ENCODE measurements at regions of chr4 and their contacts with region 1.

Region 1: DNA sequence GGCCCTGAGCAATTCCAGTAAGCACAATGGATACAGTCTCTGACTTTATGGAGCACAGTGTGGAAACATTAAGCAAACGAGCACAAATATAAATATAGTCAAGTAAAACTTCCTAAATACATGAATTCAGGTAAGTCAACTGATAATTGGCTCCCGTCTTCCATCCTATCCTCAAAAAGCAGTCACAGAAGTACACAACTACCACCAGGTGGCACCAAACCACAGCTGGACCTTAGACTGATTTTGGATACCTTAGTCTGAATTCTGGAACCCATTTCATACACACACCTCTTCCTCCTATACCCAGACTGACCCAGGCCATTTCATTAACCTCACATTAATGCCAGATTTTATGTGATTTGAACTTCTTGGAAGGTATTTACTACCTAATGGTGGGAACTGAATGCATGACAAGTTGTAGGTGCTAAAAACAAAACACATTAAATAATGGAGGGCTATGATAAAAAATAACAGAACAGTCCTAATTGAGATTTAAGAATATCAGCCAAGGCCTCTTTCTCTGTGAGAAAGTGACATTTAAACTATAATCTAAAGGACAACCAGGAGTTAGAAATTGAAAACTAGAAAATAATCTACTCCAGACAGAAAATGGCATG is 77.5 kb downstream of the ELF2 start:
- DNase-seq: peak; percentile 81
- ATAC-seq: peak; percentile 81
- H3K4me3 Mint-ChIP-seq: no peak overlapping the region
- H3K27ac Mint-ChIP-seq: no peak overlapping the region
- H3K4me1 Mint-ChIP-seq: peaks cover 4% of the 10 kb centered on the region
- H3K27me3 Mint-ChIP-seq: no peaks in the 10 kb centered on the region

Region 2: DNA sequence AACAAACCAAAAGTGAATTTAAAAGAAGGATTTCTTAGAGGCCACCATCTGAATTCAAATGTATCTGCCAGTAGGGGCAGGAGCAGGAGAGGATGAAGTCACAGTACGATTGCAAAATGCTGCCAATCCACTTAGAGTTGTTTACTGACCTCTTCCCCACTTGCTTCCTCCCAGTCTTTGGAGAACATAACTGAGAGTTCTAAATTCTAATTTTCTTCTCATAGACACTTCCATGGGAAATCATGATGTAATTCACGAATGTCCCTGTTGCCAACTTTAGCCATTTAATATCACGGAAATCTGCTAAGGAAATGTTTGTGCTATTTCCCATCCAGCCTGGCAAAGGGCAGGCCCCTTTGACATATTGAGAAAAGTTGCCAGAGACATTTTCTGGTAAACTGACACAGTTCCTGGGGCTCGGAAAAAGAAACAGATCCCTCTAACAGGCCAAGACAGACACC is 117.5 kb before region 1 on chr4:
- CTCF ChIA-PET with region 1: no interaction called
- DNase-seq: no peak
- ATAC-seq: no peak
- H3K4me3 Mint-ChIP-seq: no peak overlapping the region
- H3K27ac Mint-ChIP-seq: no peak overlapping the region
- H3K4me1 Mint-ChIP-seq: no peaks in the 10 kb centered on the region
- H3K27me3 Mint-ChIP-seq: peaks cover 5% of the 10 kb centered on the region

Region 3: DNA sequence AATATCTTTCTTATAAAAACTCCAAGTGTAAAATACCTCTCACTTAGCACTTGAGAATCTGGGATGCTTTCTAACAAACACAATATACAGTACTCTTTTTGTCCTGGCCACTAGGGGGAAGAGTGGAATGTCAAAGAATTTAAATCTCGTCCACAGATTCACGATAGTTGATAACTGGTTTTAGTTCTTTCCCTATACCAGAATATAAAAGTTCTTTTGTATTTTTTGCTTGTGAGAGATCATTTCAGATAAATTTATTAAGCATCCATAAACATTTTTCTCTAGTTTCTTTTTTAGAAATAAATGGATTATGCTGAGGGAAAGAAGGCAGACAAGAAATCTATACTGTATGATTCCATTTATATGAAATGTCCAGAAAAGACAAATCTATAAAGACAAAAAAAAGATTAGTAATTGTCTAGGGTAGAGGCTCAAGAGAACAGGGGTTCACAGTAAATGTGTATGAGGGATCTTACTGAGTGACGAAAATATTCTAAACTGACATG is 130.1 kb after region 1 on chr4:
- CTCF ChIA-PET with region 1: interaction called, 11 read pairs
- DNase-seq: no peak
- ATAC-seq: peak; percentile 72
- H3K4me3 Mint-ChIP-seq: no peak overlapping the region
- H3K27ac Mint-ChIP-seq: no peak overlapping the region
- H3K4me1 Mint-ChIP-seq: peaks cover 2% of the 10 kb centered on the region
- H3K27me3 Mint-ChIP-seq: no peaks in the 10 kb centered on the region